ENCODE measurements at regions of chr14 and their contacts with region 1.

Region 1: GRCh38 chr14:61438860-61439684 is 117.7 kb downstream of the PRKCH start:
- DNase-seq: peak in 2 of 4 donors; percentile 65 to 69
- ATAC-seq: peak; percentile 91
- H3K4me3 ChIP-seq: peak overlapping the region in 1 of 2 donors; percentile 4
- H3K27ac ChIP-seq: peak overlapping the region; percentile 76 to 81
- H3K4me1 ChIP-seq: peaks cover 18 to 56% of the 10 kb centered on the region in 2 donors
- H3K27me3 ChIP-seq: no peaks in the 10 kb centered on the region
- CTCF ChIP-seq: no peak

Region 2: GRCh38 chr14:61321385-61322010 is 117.6 kb before region 1 on chr14 and contains the start of gene PRKCH:
- intact Hi-C with region 1: loop called in 1 of 2 experiments (anchors 10 kb)
- DNase-seq: peak; percentile 44 to 94 (median 82)
- ATAC-seq: peak; percentile 87
- H3K4me3 ChIP-seq: peak within 1 kb of the TSS; percentile 65 to 72
- H3K27ac ChIP-seq: peak within 1 kb of the TSS; percentile 66 to 85
- H3K4me1 ChIP-seq: peaks cover 3 to 16% of the 10 kb centered on the region in 2 donors
- H3K27me3 ChIP-seq: peaks cover 0 to 25% of the 10 kb centered on the region in 2 donors
- CTCF ChIP-seq: no peak
- polyA plus RNA-seq, gene PRKCH: 37.9 to 47.2 (median 43.1) TPM

Region 3: DNA sequence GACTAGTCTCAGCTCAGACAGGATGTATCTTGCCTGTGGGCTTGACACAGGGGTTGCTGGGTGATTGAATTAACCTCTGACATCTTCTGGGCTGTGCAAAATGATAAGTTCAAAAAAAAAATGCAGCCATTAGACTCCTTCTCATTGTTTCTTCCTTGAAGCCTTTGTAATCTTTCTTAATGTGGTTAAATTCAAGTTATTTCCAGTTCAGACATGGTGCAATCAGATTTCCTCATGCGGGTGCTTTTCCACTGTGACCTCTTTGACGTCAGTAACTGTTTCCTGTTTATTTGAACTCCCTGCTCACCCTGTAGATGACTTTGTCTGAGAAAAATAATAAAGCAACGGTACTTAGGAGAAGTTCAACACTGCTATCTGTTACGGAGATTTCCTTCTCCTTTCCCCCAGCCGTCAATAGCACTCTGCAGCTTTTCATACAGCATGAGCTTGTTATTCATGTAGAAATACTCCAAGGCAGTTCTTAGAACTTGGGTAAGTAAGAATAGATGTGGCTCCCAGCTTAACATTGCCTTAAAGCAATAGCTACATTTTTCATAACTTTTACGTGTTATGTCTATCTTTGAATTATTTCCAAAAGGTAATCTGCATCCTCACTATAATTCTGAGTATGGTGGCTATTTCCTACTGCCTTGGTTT is 37.8 kb after region 1 on chr14:
- intact Hi-C with region 1: no loop called
- DNase-seq: peak in 2 of 4 donors; percentile 74 to 91
- ATAC-seq: peak; percentile 76
- H3K4me3 ChIP-seq: peak overlapping the region; percentile 7 to 8
- H3K27ac ChIP-seq: peak overlapping the region; percentile 95 to 98
- H3K4me1 ChIP-seq: peaks cover 21 to 95% of the 10 kb centered on the region in 2 donors
- H3K27me3 ChIP-seq: no peaks in the 10 kb centered on the region
- CTCF ChIP-seq: no peak

Measured in left lung (tissue), 14 donors.